IMR-90 (cell line): ENCODE measurements at regions of chr10 and their contacts with region 1.

Region 1: GRCh38 chr10:95214793-95215192 is 20.8 kb downstream of the ACSM6 start:
- DNase-seq: peak; percentile 76
- ATAC-seq: peak; percentile 75; the same call in 1 of the 2 replicates
- H3K4me3 ChIP-seq: no peak overlapping the region
- H3K27ac ChIP-seq: no peak overlapping the region
- H3K4me1 ChIP-seq: peaks cover 12% of the 10 kb centered on the region; the same call in 1 of the 2 replicates
- H3K27me3 ChIP-seq: no peaks in the 10 kb centered on the region
- CTCF ChIP-seq: no peak
- POLR2A ChIP-seq: no peak
- RAD21 ChIP-seq: no peak

Region 2: DNA sequence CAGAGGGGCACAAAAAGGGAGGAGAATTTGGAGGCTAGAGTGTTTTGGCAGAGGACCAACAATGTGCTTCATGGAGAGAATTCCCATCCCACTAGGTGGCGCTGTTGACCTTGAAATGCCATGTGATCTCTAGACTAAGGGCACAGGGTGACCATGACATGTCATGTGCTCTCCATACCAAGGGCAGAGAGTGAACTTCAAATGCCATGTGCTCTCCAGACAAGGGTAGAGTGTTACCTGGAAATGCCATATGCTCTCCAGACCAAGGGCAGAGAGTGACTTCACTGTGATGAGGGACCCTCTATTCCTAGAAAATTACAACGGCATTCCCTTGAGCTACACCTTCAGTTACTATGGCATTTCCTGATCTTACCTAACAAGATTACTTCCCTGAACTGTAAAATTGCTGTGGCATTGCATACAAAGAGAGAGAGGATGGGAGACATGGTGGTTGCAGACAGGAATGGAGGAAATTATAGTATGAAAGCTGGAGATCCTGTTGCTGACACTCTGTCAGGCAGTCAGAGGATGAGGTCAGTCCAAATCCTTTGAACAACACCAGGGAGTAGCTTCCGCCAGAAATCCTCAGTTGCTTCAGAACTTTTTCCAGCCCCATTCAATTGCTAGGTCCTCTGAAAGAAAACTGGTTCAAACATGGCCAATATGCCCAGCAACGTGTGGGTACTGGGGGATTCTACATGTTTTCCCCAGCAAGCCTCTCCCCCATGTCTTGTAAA is 81.6 kb before region 1 on chr10:
- CTCF ChIA-PET with region 1: no interaction called
- POLR2A ChIA-PET with region 1: no interaction called
- dilution Hi-C with region 1: no loop called
- in situ Hi-C with region 1: no loop called
- intact Hi-C with region 1: no loop called
- DNase-seq: peak; percentile 73
- ATAC-seq: peak; percentile 82
- H3K4me3 ChIP-seq: no peak overlapping the region
- H3K27ac ChIP-seq: no peak overlapping the region
- H3K4me1 ChIP-seq: no peaks in the 10 kb centered on the region
- H3K27me3 ChIP-seq: no peaks in the 10 kb centered on the region
- CTCF ChIP-seq: peak; percentile 80
- POLR2A ChIP-seq: no peak
- RAD21 ChIP-seq: peak; percentile 92

Region 3: DNA sequence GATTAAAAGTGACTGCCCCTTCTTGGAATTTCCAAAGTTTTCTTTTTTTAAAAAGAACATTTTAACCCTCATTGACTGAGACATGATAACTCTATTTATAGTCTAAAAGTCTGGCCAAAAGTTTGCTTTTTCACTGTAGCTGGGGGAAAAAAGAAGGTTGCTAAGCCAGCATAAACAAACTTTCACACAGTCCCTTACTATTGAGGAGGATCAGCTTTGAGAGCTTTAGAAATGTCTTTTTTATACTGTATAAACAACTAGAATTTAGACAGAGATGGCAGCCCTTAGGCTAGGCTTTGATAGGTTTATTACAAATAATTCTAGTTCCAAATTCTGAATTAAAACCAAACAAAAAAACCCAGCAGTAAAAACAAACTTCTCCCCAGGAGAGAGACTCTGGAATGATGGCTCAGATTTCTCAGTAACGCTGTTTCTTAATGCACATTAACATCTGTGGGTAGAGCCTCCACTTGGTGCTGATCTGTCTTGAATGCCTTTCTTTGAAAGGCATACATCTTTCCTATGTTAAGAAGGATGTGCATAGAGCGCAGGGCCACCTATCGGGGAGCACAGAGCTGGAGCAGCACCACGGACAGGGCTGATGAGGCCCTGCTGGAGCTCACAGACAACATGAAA is 176.9 kb after region 1 on chr10:
- CTCF ChIA-PET with region 1: no interaction called
- POLR2A ChIA-PET with region 1: no interaction called
- dilution Hi-C with region 1: no loop called
- in situ Hi-C with region 1: no loop called
- intact Hi-C with region 1: no loop called
- DNase-seq: peak; percentile 46
- ATAC-seq: peak; percentile 96
- H3K4me3 ChIP-seq: no peak overlapping the region
- H3K27ac ChIP-seq: no peak overlapping the region
- H3K4me1 ChIP-seq: no peaks in the 10 kb centered on the region
- H3K27me3 ChIP-seq: no peaks in the 10 kb centered on the region
- CTCF ChIP-seq: no peak
- POLR2A ChIP-seq: no peak
- RAD21 ChIP-seq: no peak

Region 4: GRCh38 chr10:95467162-95467599 is 252.4 kb after region 1 on chr10:
- CTCF ChIA-PET with region 1: no interaction called
- POLR2A ChIA-PET with region 1: interaction called, 13 read pairs
- dilution Hi-C with region 1: no loop called
- in situ Hi-C with region 1: no loop called
- intact Hi-C with region 1: no loop called
- DNase-seq: no peak
- ATAC-seq: no peak
- H3K4me3 ChIP-seq: no peak overlapping the region
- H3K27ac ChIP-seq: no peak overlapping the region
- H3K4me1 ChIP-seq: no peaks in the 10 kb centered on the region
- H3K27me3 ChIP-seq: peaks cover 3% of the 10 kb centered on the region
- CTCF ChIP-seq: no peak
- POLR2A ChIP-seq: no peak
- RAD21 ChIP-seq: no peak